ENCODE measurements at regions of chr14 and their contacts with region 1.

Region 1: DNA sequence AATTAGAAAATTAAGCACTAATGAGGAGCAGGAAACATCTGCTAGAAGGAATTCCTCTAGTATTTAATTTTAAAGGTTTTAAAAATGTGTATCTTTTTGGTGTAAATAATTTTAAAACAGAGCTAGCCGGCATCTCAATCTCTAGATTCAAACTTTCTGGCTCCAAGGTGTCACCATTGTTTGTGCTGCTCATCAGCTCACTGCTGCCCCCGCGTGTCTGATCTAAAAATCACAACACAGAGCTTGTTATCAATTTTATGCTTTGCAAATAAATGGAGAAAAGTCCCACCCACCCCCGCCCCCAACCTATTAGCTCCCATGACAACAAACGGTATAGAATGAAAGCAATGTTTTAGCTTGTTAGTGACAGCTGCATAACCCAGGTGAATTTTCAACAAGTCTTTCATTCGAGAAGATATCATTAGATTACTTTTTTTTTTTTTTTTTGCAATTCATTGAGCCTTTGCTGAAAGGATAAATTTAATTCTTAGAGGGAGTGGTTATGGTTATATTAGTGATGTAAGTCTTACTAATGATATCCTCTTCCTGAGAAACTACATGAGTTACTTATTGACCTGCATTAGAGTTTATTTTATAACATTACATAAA is 11.3 kb upstream of the ABHD12B start:
- DNase-seq: peak; percentile 96
- H3K4me3 Mint-ChIP-seq: peak overlapping the region; percentile 80
- H3K27ac Mint-ChIP-seq: peak overlapping the region; percentile 36
- H3K4me1 Mint-ChIP-seq: peaks cover 10% of the 10 kb centered on the region
- H3K27me3 Mint-ChIP-seq: no peaks in the 10 kb centered on the region

Region 2: GRCh38 chr14:50342221-50343078 is 518.1 kb before region 1 on chr14:
- CTCF ChIA-PET with region 1: no interaction called
- intact Hi-C with region 1: loop called (anchors 2 kb)
- DNase-seq: peak; percentile 79
- H3K4me3 Mint-ChIP-seq: no peak overlapping the region
- H3K27ac Mint-ChIP-seq: no peak overlapping the region
- H3K4me1 Mint-ChIP-seq: peaks cover 26% of the 10 kb centered on the region
- H3K27me3 Mint-ChIP-seq: no peaks in the 10 kb centered on the region

Region 3: DNA sequence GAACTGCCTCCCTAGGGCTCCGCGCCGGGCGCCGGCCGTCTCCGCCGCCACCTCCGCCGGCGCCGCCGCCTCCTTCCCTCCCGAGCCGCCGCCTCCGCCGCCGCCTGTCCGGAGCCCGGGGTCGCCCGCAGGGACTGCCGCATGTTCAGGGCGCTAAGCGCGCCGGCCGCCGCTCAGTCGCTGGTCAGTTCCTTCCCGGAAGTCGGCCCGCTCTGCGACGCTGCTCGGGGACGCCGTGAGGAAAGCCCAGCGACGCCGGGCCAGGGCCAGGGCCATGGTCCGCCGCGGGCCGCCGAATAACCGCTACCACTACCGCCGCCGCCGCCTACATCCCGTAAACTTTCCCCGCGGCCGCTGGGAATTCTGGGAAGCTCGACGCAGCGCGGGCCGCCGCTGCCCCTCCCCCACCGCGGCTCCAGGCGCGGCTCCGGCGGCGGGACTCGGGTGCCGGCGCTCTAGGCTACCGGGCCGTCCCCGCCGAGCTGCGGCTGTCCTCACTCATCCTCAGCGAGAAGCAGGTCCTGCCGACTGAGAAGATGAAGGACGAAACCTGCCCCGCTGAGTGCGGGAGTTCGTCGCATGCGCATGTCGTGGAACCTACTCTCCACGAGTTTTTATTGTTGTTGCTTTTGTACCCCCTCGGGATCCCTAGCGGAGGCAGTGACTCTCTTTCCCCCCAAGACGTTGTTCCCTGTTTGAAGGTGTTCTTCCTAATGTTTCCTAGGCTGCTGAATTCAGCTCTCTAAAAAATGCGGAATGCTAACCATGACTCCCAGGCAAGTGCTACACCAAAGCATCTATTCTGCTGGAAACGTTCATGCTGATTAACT is 192.4 kb before region 1 on chr14 and contains the start of gene SAV1:
- CTCF ChIA-PET with region 1: interaction called, 5 read pairs
- intact Hi-C with region 1: loop called (anchors 1 kb)
- DNase-seq: peak; percentile 65
- H3K4me3 Mint-ChIP-seq: no peak within 1 kb of the TSS
- H3K27ac Mint-ChIP-seq: peak within 1 kb of the TSS; percentile 56
- H3K4me1 Mint-ChIP-seq: peaks cover 14% of the 10 kb centered on the region
- H3K27me3 Mint-ChIP-seq: no peaks in the 10 kb centered on the region
- total RNA-seq, gene SAV1: 12.7 to 13.5 TPM

Region 4: DNA sequence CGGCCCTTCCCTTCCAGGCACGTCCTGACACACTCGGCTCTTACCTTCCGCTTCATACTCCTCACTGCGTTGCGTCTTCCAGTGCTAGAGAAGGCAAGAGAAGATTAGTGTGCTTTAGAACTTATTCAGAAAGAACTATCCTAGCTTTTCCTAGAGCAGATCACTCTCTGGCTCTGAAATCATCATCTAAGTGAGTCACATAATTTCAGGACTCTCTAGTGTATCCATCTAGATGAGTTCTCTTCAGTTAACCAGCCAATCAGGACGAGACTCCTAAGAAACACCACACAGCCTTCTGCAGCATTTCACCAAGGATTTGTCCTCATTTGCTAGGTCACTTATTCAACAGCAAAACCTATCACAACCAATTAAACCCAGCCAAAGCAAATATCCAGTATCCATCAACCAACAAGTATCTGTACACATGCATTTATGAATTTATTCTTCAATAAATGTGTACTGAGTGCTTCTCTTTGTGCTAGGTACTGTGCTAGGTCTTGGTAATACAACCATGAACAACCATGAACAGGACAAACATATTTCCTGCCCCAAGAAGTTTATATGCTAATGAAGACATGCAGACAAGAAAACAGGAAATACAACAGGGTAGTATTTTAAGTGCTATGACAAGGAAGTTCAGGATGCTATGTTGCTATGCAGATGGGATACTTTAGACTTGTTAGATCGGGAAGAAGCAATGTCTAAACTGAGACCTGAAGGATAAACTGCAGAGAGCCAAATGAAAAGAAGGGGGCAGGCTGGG is 81.7 kb before region 1 on chr14:
- CTCF ChIA-PET with region 1: interaction called, 143 read pairs
- intact Hi-C with region 1: loop called (anchors 1 kb)
- DNase-seq: no peak
- H3K4me3 Mint-ChIP-seq: no peak overlapping the region
- H3K27ac Mint-ChIP-seq: no peak overlapping the region
- H3K4me1 Mint-ChIP-seq: peaks cover 32% of the 10 kb centered on the region
- H3K27me3 Mint-ChIP-seq: no peaks in the 10 kb centered on the region

Region 5: DNA sequence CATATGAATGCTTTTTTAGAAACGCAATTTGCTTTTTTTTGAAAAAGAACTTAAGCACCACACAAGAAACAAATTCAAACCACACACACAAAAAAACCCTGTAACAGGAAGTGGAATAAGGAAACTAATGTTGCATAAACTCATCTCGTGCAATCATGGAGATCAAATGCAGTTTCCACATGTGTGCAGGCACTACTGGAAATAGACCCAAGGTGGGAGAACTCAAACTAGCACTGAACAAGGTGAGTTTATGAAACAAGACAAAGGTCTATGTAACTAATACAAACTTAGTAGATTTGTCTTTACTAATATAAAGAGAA is 47.1 kb before region 1 on chr14:
- CTCF ChIA-PET with region 1: interaction called, 8 read pairs
- intact Hi-C with region 1: loop called (anchors 2 kb)
- DNase-seq: peak; percentile 45
- H3K4me3 Mint-ChIP-seq: peak overlapping the region; percentile 75
- H3K27ac Mint-ChIP-seq: peak overlapping the region; percentile 98
- H3K4me1 Mint-ChIP-seq: peaks cover 55% of the 10 kb centered on the region
- H3K27me3 Mint-ChIP-seq: no peaks in the 10 kb centered on the region

Region 6: DNA sequence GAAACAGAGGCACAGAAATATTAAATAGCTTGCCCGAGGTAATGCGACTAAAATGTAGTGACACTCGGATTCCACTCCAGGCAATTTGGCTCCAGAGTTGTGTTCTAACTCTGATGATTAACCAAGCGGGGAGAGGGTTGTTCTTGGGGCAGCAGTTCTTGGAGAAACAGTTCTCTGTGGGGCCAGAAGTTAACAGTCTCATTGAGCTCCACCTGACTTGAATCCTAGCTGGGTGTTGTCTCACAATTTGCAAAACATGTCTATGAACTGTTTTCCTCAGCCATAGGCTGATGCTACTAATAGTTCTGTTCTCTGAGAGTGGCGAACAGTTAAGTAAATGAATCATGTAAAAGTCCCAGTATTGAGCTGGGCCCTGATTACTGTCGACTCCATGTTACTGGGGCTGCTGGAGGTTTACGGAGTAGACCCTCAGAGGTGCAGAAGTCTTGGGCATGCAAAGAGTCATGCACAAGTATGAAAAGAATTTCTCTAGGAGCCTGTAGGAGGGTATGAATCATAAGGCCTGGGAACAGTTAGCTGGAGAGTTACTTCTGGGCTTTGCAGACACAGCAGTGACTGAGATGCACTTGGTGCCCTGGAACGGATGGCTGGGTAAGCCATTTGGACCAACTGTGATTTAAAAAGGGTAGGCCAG is 14.2 kb before region 1 on chr14:
- CTCF ChIA-PET with region 1: interaction called, 28 read pairs
- intact Hi-C with region 1: no loop called
- DNase-seq: no peak
- H3K4me3 Mint-ChIP-seq: no peak overlapping the region
- H3K27ac Mint-ChIP-seq: no peak overlapping the region
- H3K4me1 Mint-ChIP-seq: no peaks in the 10 kb centered on the region
- H3K27me3 Mint-ChIP-seq: no peaks in the 10 kb centered on the region

Measured in activated naive CD4-positive, alpha-beta T cell treated with anti-CD3 and anti-CD28 coated beads for 36 hours (primary cell).